SK-N-SH (cell line): ENCODE measurements at regions of chr18 and their contacts with region 1.

Region 1: DNA sequence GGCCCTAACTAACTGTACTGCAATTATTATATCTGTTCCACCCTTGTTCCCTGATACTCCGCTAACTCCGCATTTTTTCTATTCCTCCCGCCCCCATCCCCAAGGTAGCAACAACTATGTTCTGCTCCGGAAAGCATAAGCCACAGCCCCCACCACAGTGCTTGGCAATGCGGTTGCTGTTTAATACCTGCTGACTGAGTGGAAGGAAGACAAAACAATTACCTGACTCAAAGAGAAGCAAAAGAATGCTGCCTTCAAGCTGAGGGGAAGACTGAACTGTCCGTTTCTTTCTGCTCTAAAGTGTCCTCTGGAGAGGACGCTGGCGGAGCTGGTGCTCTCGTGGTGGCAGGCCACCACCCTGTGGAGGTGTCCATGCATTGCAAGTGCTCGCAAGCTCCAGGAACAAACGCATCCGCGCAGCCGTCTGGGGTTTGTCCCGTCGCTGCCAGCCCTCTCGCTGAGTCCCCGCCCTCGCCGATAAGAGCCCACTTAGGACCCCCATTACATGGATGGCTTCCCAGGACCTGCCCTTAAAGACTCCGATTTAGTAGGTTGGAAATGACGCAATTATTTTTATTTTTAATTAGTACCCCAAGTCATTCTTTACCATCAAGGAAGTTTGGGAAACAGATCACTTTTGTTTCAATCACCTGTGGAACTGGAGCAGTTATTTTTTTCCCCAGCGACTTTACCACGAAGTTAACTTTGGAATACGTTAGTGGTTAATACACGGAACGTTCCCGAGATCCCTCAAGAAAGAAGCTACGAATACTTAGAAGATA is 1.6 kb upstream of the MYL12A start:
- DNase-seq: peak; percentile 77
- H3K4me3 ChIP-seq: peak overlapping the region; percentile 30 to 56
- H3K27ac ChIP-seq: peak overlapping the region; percentile 94 to 98
- H3K4me1 ChIP-seq: peaks cover 10 to 11% of the 10 kb centered on the region in 2 experiments; a peak in 3 of 4 replicates
- H3K27me3 ChIP-seq: no peaks in the 10 kb centered on the region
- CTCF ChIP-seq: peak; percentile 90
- EP300 ChIP-seq: no peak
- RAD21 ChIP-seq: peak; percentile 98

Region 2: DNA sequence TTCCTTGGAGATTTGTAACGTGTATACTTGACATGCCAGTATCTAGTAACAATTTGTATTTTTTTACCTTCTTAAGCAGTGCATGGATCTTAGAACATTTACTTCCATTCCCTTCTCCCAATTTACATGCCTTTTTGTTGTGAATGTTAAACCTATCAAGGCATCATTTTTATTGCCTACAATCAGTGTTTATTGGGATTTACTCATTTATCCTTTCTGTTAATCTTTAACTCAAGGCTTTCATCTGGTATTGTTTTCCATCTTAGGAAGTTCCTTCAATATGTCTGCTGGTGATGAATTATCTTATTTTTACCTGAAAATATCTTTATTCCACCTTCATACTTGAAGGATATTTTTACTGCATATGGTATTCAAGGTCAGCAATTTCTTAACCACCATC is 487.7 kb before region 1 on chr18:
- CTCF ChIA-PET with region 1: no interaction called
- POLR2A ChIA-PET with region 1: no interaction called
- DNase-seq: no peak
- H3K4me3 ChIP-seq: no peak overlapping the region
- H3K27ac ChIP-seq: no peak overlapping the region
- H3K4me1 ChIP-seq: no peaks in the 10 kb centered on the region
- H3K27me3 ChIP-seq: no peaks in the 10 kb centered on the region
- CTCF ChIP-seq: no peak
- EP300 ChIP-seq: no peak
- RAD21 ChIP-seq: no peak

Region 3: DNA sequence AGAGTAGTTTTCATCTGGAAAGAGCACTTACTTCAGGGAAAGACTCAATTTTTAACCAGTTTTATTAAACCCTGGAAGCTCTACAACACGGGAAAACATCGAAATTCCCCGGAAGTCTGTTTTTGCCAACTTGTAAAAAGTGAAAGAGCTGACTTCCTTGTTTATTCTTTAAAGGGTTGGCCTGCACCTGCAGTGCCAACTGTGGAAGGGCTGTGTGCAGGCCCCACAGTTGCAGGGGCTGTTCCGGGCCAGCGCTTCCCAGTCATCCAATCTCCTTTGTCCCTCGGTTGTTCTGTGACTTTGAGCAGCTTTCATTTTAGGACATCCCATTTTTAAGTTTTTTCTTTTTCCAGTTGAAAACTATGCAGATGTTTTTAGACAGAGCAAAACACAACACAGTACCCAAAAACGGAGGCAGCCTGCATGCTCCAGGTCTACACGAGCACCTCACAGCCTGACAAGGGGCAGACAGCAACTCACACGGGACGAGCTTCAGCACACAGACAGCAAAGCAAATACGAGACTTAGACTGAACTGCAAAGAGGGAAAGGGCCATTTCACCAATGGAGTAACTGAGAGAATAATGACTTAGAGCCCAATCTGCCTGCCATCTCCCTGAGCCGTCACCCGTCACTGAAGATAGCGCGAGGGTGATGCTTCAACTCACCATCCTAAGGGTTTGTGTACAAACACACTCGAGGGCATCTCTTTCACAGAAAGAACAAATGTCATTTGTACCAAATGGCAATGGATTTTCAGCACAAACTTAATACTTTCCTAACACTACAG is 328.6 kb before region 1 on chr18:
- CTCF ChIA-PET with region 1: interaction called, 10 read pairs
- POLR2A ChIA-PET with region 1: no interaction called
- DNase-seq: no peak
- H3K4me3 ChIP-seq: no peak overlapping the region
- H3K27ac ChIP-seq: no peak overlapping the region
- H3K4me1 ChIP-seq: no peaks in the 10 kb centered on the region
- H3K27me3 ChIP-seq: no peaks in the 10 kb centered on the region
- CTCF ChIP-seq: no peak
- EP300 ChIP-seq: no peak
- RAD21 ChIP-seq: no peak

Region 4: DNA sequence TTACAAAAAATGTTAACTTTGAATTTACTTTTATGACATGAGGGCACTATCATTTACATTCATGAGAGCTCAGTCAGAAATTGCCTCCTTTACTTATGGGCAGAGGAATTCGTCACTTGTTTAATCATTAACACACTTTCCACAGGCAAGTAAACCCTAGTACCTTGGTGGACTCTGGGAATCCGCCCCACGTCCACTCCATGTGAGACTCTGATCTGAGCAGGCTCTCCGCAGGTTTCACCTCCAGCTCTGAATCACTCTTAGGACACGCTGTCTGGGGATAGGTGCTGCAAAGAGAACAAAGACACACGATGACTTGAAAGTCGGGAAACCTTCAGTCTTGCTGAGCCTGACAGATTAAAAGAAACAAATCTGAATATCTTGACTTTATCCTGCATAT is 306.7 kb before region 1 on chr18:
- CTCF ChIA-PET with region 1: interaction called, 38 read pairs
- POLR2A ChIA-PET with region 1: no interaction called
- DNase-seq: no peak
- H3K4me3 ChIP-seq: no peak overlapping the region
- H3K27ac ChIP-seq: no peak overlapping the region
- H3K4me1 ChIP-seq: no peaks in the 10 kb centered on the region; a peak in 1 of 4 replicates
- H3K27me3 ChIP-seq: no peaks in the 10 kb centered on the region
- CTCF ChIP-seq: no peak
- EP300 ChIP-seq: no peak
- RAD21 ChIP-seq: no peak

Region 5: GRCh38 chr18:2958819-2959298 is 287.2 kb before region 1 on chr18:
- CTCF ChIA-PET with region 1: interaction called, 13 read pairs
- POLR2A ChIA-PET with region 1: no interaction called
- DNase-seq: peak; percentile 11
- H3K4me3 ChIP-seq: no peak overlapping the region
- H3K27ac ChIP-seq: peak overlapping the region in 1 of 2 experiments; percentile 67; a peak in 3 of 4 replicates
- H3K4me1 ChIP-seq: peaks cover 9 to 11% of the 10 kb centered on the region in 2 experiments; a peak in 3 of 4 replicates
- H3K27me3 ChIP-seq: no peaks in the 10 kb centered on the region
- CTCF ChIP-seq: no peak
- EP300 ChIP-seq: peak in 1 of 2 experiments; percentile 59; a peak in 1 of 4 replicates
- RAD21 ChIP-seq: no peak

Region 6: GRCh38 chr18:3129053-3129864 is 116.8 kb before region 1 on chr18:
- CTCF ChIA-PET with region 1: interaction called, 11 read pairs
- POLR2A ChIA-PET with region 1: no interaction called
- DNase-seq: peak; percentile 84
- H3K4me3 ChIP-seq: no peak overlapping the region; a peak in 1 of 4 replicates
- H3K27ac ChIP-seq: no peak overlapping the region
- H3K4me1 ChIP-seq: peaks cover 0 to 2% of the 10 kb centered on the region in 2 experiments; a peak in 2 of 4 replicates
- H3K27me3 ChIP-seq: no peaks in the 10 kb centered on the region
- CTCF ChIP-seq: peak; percentile 87
- EP300 ChIP-seq: no peak
- RAD21 ChIP-seq: peak; percentile 71

Region 7: GRCh38 chr18:3219631-3220335 is 26.3 kb before region 1 on chr18 and contains the start of gene MYOM1:
- CTCF ChIA-PET with region 1: interaction called, 15 read pairs
- POLR2A ChIA-PET with region 1: interaction called, 3 read pairs
- DNase-seq: no peak
- H3K4me3 ChIP-seq: no peak within 1 kb of the TSS
- H3K27ac ChIP-seq: no peak within 1 kb of the TSS
- H3K4me1 ChIP-seq: no peaks in the 10 kb centered on the region
- H3K27me3 ChIP-seq: no peaks in the 10 kb centered on the region
- CTCF ChIP-seq: no peak
- EP300 ChIP-seq: no peak
- RAD21 ChIP-seq: no peak
- polyA plus RNA-seq, gene MYOM1: 0.07 and 0.08 TPM in 2 replicates

Region 8: GRCh38 chr18:3323900-3324299 is 77.9 kb after region 1 on chr18:
- CTCF ChIA-PET with region 1: no interaction called
- POLR2A ChIA-PET with region 1: no interaction called
- DNase-seq: no peak
- H3K4me3 ChIP-seq: no peak overlapping the region
- H3K27ac ChIP-seq: peak overlapping the region; percentile 16 to 54; a peak in 3 of 4 replicates
- H3K4me1 ChIP-seq: peaks cover 15 to 37% of the 10 kb centered on the region in 2 experiments; a peak in 3 of 4 replicates
- H3K27me3 ChIP-seq: no peaks in the 10 kb centered on the region
- CTCF ChIP-seq: no peak
- EP300 ChIP-seq: no peak
- RAD21 ChIP-seq: no peak